Activated CD4-positive, alpha-beta T cell treated with anti-CD3 and anti-CD28 coated beads for 36 hours (primary cell): ENCODE measurements at regions of chr9 and their contacts with region 1.

Region 1: DNA sequence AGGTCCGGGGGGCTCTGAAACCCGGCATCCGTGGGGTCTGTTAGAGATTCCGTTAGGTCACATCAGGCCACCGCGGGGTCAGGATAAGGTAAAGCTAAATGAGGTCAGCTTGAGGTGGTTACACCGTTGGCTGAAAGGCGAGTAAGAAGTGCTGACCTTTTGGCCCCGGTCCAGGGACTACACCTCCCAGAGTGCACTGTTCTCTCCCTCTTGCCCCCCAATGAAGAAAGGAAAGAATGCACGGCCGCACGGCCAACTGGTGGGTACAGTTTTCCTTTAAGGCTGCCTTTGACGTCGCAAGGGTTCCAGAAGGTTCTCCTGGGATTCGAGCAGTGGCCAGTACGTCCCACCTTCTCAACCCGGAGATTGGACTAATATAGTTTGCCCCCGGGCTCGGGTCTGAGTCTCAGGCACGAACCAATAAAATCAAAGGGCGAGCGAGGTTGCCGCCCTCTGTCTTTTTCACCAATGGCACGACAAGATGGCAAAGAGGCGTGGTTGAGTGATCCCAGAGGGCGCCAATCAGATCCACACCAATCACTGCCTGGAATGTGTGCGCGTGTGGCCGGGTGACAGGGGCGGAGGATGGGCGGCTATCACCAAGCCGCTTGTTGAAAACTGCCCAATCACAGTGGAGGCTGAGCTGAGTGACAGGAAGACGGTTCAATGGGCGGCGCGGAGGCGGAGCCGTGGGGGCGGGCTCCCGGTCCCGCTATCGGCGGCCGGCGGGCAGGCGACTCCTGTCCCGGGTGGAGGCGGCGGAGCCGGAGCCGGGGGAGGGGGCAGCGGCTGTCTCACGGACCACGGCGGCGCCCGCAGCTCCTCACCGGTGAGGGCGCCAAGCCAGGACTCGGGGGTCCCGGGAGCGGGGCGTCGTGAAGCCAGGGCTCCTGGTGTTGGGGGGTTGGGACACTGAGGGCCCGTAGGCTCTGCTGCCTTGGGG is at the start of gene DNAJB5:
- DNase-seq: peak; percentile 98
- ATAC-seq: peak; percentile 88
- H3K4me3 Mint-ChIP-seq: peak within 1 kb of the TSS; percentile 78
- H3K27ac Mint-ChIP-seq: peak within 1 kb of the TSS; percentile 94
- H3K4me1 Mint-ChIP-seq: peaks cover 82% of the 10 kb centered on the region
- H3K27me3 Mint-ChIP-seq: no peaks in the 10 kb centered on the region
- total RNA-seq, gene DNAJB5: 10.3 to 11.3 TPM

Region 2: DNA sequence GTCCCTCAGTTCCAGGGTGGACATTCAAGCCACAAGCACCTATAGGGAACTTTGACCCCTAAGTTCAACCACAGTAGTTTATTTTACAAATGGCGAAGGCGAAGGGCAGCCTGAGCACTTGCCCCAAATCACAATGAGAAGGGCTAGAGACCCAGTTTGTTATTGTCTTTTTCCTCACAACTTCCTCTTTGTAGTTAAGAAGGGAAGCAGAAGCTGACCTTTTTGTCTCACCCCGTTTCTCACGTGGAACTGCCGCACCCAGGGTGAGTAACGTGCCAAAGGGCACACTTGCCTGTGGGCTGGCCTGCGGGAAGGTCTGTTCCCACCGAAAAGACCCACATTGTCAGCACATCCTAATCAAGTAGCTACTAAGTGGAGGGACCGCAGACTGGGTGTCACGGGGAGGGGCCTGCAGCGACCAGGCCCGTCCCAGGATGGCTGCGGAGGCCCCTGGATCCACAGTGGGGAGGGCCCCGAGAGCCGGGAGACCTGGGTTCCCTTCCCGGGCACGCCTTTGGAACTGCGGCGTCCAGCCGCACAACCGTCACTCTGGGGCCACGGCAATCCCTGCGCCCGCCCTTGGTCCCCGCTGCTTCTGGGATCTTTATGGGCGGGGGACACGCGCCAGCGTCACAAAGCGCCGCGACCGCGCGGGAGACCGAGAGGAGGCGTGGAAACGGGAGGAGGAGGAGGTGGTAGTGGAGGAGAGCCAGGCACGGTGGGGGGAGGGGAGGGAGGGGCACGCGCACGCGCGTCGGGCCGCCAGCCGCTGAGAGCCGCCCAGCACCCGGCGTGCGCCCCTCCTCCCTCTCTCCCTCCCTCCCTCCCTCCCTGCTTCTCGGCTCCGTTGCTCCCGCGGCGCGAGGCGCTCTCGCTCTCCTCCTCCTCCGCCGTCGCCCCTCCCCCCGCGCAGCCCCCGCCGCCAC is 1172.7 kb before region 1 on chr9 and contains the start of gene UBE2R2:
- CTCF ChIA-PET with region 1: no interaction called
- POLR2A ChIA-PET with region 1: no interaction called
- intact Hi-C with region 1: loop called in 1 of 2 experiments (anchors 5 kb)
- DNase-seq: peak; percentile 97
- ATAC-seq: peak; percentile 81
- H3K4me3 Mint-ChIP-seq: peak within 1 kb of the TSS; percentile 89
- H3K27ac Mint-ChIP-seq: peak within 1 kb of the TSS; percentile 92
- H3K4me1 Mint-ChIP-seq: peaks cover 56% of the 10 kb centered on the region
- H3K27me3 Mint-ChIP-seq: no peaks in the 10 kb centered on the region
- total RNA-seq, gene UBE2R2: 47.7 to 49.5 TPM

Region 3: DNA sequence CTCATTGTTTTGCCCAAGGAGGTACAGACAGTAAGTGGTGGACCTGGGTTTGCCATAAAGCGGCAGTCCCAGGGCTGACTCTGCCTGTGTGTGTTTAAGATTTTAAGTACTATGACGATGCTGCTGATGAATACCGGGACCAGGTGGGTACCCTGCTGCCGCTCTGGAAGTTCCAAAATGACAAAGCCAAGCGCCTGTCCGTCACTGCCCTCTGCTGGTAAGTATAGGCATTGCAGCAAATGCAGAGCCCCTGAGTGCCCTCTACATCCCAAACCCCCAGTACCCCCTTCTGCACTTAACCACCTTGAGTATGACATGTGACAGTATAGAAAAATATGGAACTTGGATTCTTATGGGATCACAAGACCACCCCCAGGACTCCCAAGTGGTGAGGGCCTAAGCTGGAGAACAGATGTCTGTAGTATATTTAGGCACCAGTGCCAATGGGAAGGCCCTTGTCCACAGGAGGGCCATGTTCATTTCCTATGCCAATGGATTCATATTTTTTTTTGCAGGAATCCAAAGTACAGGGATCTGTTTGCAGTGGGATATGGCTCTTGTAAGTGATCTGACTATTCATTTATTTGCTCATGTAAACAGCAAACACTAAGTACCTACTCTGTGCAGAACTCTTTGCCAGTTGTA is 488.5 kb before region 1 on chr9:
- CTCF ChIA-PET with region 1: no interaction called
- POLR2A ChIA-PET with region 1: no interaction called
- intact Hi-C with region 1: no loop called
- DNase-seq: peak; percentile 90
- ATAC-seq: peak; percentile 99
- H3K4me3 Mint-ChIP-seq: no peak overlapping the region
- H3K27ac Mint-ChIP-seq: no peak overlapping the region
- H3K4me1 Mint-ChIP-seq: peaks cover 14% of the 10 kb centered on the region
- H3K27me3 Mint-ChIP-seq: peaks cover 9% of the 10 kb centered on the region

Region 4: GRCh38 chr9:34526026-34526425 is 463.2 kb before region 1 on chr9:
- CTCF ChIA-PET with region 1: no interaction called
- POLR2A ChIA-PET with region 1: no interaction called
- intact Hi-C with region 1: no loop called
- DNase-seq: no peak
- ATAC-seq: no peak
- H3K4me3 Mint-ChIP-seq: no peak overlapping the region
- H3K27ac Mint-ChIP-seq: no peak overlapping the region
- H3K4me1 Mint-ChIP-seq: peaks cover 24% of the 10 kb centered on the region
- H3K27me3 Mint-ChIP-seq: peaks cover 22% of the 10 kb centered on the region

Region 5: DNA sequence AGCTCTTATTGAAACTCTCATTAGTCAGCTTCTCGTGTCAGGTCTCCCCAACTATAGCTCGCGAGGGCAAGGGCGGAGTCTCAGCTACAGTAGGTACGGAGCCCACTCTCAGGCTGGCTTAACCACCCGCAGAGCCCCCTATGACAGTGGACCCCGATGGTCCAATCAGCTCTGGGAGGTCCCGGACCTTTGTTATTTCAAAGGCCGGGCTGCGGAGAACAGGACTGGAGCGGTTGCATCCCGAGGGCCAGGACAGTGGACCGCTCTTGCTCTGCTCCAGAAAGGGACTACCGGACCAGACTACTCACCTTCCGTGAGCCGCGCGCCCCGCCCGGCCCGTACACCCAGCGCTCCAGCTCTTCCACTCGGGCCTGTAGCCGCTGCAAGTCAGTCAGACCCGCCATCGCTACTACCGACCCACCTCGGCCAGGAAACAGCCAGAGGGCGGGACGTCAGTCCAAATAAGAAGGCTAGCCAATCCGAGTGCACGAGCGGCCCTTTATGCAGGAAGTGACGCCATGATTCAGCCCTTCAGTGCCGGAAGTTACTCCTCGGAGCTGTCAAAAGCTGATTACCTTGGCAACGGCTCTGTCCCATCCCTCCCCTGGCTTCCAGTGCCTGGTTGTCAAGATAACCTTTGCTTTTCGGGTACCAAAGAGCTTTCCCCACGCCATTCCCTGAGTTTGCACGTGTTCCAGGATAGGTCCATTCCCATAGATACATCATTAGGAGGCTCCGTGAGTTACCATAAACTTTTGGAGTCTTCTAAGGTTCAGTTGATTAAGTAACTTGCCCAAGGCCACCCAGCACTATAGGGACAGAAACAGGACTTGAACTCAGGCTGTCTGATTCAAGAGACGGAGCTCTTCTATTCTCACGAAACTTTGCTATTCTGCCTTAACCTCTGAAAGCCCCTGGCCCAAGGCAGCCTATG is 368.9 kb before region 1 on chr9 and contains the start of gene DCTN3:
- CTCF ChIA-PET with region 1: no interaction called
- POLR2A ChIA-PET with region 1: no interaction called
- intact Hi-C with region 1: loop called in 1 of 2 experiments (anchors 1 kb)
- DNase-seq: peak; percentile 95
- ATAC-seq: peak; percentile 99
- H3K4me3 Mint-ChIP-seq: peak within 1 kb of the TSS; percentile 88
- H3K27ac Mint-ChIP-seq: peak within 1 kb of the TSS; percentile 77
- H3K4me1 Mint-ChIP-seq: peaks cover 25% of the 10 kb centered on the region
- H3K27me3 Mint-ChIP-seq: peaks cover 25% of the 10 kb centered on the region
- total RNA-seq, gene DCTN3: 65.9 to 68.4 TPM

Region 6: DNA sequence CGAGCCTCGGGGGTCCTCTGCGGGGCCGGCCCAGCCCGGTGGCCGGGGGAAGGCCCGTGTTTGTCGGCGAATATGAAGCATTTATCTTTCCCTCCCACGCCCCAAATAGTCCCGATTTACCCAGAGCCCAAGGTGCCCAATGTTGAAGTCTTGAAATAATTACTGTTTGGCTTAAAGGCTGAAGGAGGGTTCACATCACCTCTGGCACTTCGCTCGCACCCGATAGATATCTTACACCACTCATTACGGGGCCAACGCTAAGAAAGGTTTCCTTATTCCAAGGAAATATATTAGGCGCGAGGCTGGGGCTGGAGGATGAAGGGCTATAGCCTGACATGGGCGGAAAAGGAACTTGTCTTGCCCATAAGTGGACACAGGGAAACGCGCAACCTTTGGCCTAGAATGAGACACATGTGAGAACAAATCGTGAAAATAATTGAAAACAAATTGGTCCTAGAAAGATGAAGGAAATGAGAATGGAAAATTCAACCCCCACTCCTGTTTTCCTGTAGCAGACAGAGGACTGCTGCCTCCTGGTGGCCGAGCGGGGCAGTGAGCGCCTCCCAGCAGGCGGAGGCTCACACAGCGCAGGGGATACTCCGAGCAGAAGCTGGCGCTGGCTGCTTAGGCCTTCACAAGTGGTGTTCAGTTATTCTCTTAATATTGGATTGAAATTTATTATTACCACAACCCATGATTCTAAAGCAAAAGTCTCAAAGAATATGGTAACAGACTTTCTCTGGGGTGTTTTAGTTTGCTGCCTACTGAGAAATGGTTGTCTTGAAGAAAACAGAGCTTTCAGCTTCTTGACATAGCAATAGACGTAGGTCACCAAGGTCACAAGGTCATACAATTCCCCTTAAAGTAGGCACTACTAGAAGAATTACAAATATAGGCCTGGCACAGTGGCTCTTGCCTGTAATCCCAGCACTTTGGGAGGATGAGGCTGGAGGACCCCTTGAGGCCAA is 287.2 kb before region 1 on chr9:
- CTCF ChIA-PET with region 1: no interaction called
- POLR2A ChIA-PET with region 1: no interaction called
- intact Hi-C with region 1: loop called in 1 of 2 experiments (anchors 5 kb)
- DNase-seq: peak; percentile 91
- ATAC-seq: peak; percentile 85
- H3K4me3 Mint-ChIP-seq: peak overlapping the region; percentile 72
- H3K27ac Mint-ChIP-seq: peak overlapping the region; percentile 58
- H3K4me1 Mint-ChIP-seq: peaks cover 7% of the 10 kb centered on the region
- H3K27me3 Mint-ChIP-seq: peaks cover 8% of the 10 kb centered on the region

Region 7: DNA sequence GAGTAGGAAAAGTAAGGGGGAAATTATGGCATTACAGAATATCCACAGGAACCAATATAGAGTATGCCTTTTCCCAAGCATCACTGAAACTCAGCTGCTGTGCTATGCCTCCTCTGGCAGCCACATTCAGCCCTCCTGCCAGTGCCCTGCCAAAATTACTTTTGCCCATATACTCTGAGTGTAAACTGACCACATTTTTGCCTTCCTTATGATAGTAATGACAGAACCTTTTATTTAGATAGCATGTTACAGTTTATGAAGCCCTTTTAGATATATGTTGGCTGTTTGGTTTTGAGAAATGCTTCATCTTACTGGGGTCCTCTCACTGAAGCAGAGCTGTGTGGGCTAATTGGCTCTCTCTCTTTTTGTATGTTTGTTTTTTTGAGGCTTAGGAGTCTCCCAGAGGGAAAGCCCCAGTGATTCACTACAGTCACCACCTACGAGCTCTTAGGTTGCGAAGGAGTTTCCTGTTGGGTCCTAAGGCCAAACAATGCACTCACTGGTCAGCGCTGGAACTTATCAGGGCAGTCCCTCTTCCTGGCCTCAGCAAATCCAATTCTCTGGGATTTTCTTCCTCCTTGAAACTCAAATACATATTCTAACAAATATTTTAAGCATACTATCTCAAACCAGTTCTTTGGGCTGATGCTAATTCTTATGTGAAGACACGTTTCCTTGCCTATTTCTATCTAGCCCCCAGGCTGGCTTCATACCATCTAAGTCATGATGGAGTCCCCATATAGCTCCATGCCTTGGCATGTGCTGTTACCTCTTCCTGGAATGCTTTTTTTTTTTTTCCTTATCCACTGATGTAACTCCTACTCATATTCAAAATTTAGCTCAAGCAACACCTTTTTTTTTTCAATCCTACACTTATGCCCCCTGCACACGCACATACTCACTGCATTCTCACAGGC is 27.4 kb before region 1 on chr9:
- CTCF ChIA-PET with region 1: interaction called, 6 read pairs
- POLR2A ChIA-PET with region 1: no interaction called
- intact Hi-C with region 1: loop called in 1 of 2 experiments (anchors 2 kb)
- DNase-seq: peak; percentile 55
- ATAC-seq: peak; percentile 85
- H3K4me3 Mint-ChIP-seq: no peak overlapping the region
- H3K27ac Mint-ChIP-seq: no peak overlapping the region
- H3K4me1 Mint-ChIP-seq: peaks cover 28% of the 10 kb centered on the region
- H3K27me3 Mint-ChIP-seq: peaks cover 48% of the 10 kb centered on the region

Region 8: GRCh38 chr9:35096035-35096849 is 107.0 kb after region 1 on chr9 and contains the start of gene PIGO:
- CTCF ChIA-PET with region 1: interaction called, 4 read pairs
- POLR2A ChIA-PET with region 1: no interaction called
- intact Hi-C with region 1: loop called in 1 of 2 experiments (anchors 1 kb)
- DNase-seq: peak; percentile 95
- ATAC-seq: peak; percentile 91
- H3K4me3 Mint-ChIP-seq: peak within 1 kb of the TSS; percentile 85
- H3K27ac Mint-ChIP-seq: peak within 1 kb of the TSS; percentile 92
- H3K4me1 Mint-ChIP-seq: peaks cover 25% of the 10 kb centered on the region
- H3K27me3 Mint-ChIP-seq: no peaks in the 10 kb centered on the region
- total RNA-seq, gene PIGO: 21.0 to 27.2 TPM

Region 9: DNA sequence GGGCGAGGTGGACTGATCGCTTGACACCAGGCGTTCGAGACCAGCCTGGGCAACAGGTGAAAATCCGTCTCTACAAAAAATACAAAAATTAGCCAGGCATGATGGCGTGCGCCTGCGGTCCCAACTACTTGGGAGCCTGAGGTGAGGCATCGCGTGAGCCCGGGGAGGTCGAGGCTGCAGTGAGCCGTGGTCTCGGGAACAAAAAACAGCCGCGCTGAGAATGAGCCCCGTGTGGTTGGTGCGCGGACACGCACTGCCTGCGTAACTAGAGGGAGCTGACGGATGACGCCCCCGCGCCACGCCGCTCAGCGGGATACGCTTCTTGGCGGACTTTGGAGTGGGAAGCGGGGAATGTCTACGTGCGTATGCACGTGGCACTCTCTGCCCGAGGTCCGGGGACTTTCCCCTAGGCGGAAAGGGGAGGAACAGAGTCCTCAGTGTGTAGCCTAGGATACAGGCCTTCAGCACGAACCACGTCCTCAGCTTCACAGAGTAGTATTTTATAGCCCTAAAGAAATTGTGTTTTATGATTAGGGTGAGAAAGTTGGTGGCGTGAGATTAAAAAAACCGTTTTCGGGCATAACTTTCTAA is 668.4 kb after region 1 on chr9 and contains the start of gene RMRP:
- CTCF ChIA-PET with region 1: no interaction called
- POLR2A ChIA-PET with region 1: no interaction called
- intact Hi-C with region 1: loop called in 1 of 2 experiments (anchors 5 kb)
- DNase-seq: peak; percentile 97
- ATAC-seq: peak; percentile 95
- H3K4me3 Mint-ChIP-seq: peak within 1 kb of the TSS; percentile 80
- H3K27ac Mint-ChIP-seq: peak within 1 kb of the TSS; percentile 98
- H3K4me1 Mint-ChIP-seq: peaks cover 64% of the 10 kb centered on the region
- H3K27me3 Mint-ChIP-seq: peaks cover 2% of the 10 kb centered on the region
- total RNA-seq, gene RMRP: 894 to 11,462 TPM

Region 10: DNA sequence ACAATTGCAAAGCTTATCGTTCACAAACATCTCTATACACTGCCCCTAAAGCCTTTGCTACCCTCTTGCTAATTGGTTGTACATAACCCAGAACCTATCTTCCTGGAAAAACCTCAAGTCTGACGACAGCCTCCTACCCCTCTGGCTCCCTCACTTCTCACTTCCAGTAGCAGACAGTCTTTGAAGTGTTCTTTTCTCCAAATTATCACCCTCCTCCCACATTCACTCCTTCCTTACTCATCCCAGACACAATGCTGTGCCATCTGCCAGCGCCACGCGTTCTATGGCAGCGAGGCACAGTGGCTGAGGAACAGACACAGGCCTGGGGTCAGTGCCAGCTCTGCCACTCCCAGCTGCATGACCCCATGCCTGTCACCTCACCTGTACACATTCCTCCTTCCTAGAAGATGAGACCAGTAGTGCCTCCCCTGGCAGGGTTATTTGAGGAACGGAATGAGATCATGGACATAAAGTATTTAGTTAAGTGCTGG is 1229.2 kb after region 1 on chr9:
- CTCF ChIA-PET with region 1: no interaction called
- POLR2A ChIA-PET with region 1: no interaction called
- intact Hi-C with region 1: no loop called
- DNase-seq: peak; percentile 23
- ATAC-seq: peak; percentile 80
- H3K4me3 Mint-ChIP-seq: no peak overlapping the region
- H3K27ac Mint-ChIP-seq: peak overlapping the region; percentile 86
- H3K4me1 Mint-ChIP-seq: peaks cover 37% of the 10 kb centered on the region
- H3K27me3 Mint-ChIP-seq: no peaks in the 10 kb centered on the region